ENCODE measurements at regions of chr12 and their contacts with region 1.

Region 1: GRCh38 chr12:98397316-98398105 is 117.9 kb upstream of the TMPO start:
- DNase-seq: peak; percentile 78
- CTCF ChIP-seq: peak; percentile 92

Region 2: GRCh38 chr12:98408681-98409080 is 11.2 kb after region 1 on chr12:
- CTCF ChIA-PET with region 1: interaction called, 14 read pairs
- POLR2A ChIA-PET with region 1: no interaction called
- DNase-seq: no peak
- CTCF ChIP-seq: no peak